ENCODE measurements at regions of chr12 and their contacts with region 1.

Region 1: DNA sequence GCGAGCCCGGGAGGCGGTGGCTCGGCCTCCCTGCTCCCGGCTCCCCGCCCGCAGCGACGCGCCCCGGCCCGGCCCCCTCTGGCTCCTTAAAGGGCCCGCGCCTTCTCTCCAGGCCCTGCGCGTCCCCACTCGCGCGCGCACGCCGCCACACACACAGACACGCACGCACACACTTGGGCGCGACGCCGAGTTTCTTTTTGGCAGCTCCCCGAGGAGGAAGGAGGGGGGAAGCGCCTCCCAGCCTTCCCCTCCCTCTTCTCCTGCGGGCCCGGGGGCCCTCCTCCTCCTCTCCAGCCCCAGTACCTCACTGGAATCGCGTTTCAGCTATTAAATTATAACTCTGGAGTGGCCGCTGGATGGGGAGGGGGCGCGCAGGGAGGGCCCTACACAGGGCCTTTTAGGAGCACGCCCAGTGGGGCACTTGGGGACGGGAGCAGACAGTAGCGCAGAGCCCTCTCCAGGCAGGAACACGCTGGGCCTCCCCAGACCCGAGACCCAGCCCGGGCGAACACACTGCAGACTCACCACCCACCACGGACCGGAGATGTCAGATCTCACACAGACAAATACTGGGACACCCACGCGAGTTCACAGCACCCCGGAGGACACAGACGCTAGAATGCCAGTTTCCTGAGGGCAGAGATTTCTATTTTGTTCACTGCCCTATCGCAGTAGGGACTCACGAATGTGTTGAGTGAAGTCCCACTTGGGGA is 405 bp upstream of the NCOR2 start:
- DNase-seq: peak; percentile 96
- H3K4me3 Mint-ChIP-seq: peak overlapping the region; percentile 76
- H3K27ac Mint-ChIP-seq: peak overlapping the region; percentile 79
- H3K4me1 Mint-ChIP-seq: peaks cover 14% of the 10 kb centered on the region
- H3K27me3 Mint-ChIP-seq: peaks cover 2% of the 10 kb centered on the region

Region 2: GRCh38 chr12:124453419-124454351 is 114.1 kb before region 1 on chr12:
- intact Hi-C with region 1: loop called (anchors 1 kb)
- DNase-seq: peak; percentile 92
- H3K4me3 Mint-ChIP-seq: peak overlapping the region; percentile 67
- H3K27ac Mint-ChIP-seq: peak overlapping the region; percentile 75
- H3K4me1 Mint-ChIP-seq: peaks cover 37% of the 10 kb centered on the region
- H3K27me3 Mint-ChIP-seq: no peaks in the 10 kb centered on the region

Region 3: GRCh38 chr12:124466216-124467128 is 101.3 kb before region 1 on chr12:
- intact Hi-C with region 1: no loop called
- DNase-seq: peak; percentile 95
- H3K4me3 Mint-ChIP-seq: peak overlapping the region; percentile 69
- H3K27ac Mint-ChIP-seq: peak overlapping the region; percentile 80
- H3K4me1 Mint-ChIP-seq: peaks cover 26% of the 10 kb centered on the region
- H3K27me3 Mint-ChIP-seq: no peaks in the 10 kb centered on the region

Region 4: GRCh38 chr12:124588751-124589267 is 21.0 kb after region 1 on chr12:
- intact Hi-C with region 1: loop called (anchors 2 kb)
- DNase-seq: peak; percentile 68
- H3K4me3 Mint-ChIP-seq: no peak overlapping the region
- H3K27ac Mint-ChIP-seq: peak overlapping the region; percentile 21
- H3K4me1 Mint-ChIP-seq: peaks cover 10% of the 10 kb centered on the region
- H3K27me3 Mint-ChIP-seq: peaks cover 15% of the 10 kb centered on the region

Region 5: DNA sequence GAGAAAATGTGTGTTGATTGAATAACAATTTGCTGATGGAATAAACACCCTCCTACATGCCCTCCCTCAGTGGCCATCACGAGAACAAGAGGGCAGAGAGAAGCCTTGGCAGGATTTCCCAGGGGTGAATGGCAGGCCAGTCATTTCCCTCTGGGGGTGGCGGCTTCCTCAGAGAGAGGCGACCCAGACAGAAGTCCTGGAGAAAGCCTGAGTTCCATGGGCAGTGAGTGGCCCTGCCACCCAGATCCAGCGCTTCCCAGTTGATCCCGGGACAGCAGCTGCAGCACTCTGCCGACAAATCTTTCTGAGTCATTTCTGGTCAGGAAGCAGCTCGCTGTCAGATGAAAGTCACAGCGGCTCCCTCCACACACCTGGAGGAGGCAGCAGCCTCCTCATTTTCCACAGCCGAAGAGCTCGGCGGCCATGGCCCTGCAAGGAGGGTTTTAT is 172.9 kb after region 1 on chr12:
- intact Hi-C with region 1: no loop called
- DNase-seq: peak; percentile 63
- H3K4me3 Mint-ChIP-seq: no peak overlapping the region
- H3K27ac Mint-ChIP-seq: no peak overlapping the region
- H3K4me1 Mint-ChIP-seq: peaks cover 23% of the 10 kb centered on the region
- H3K27me3 Mint-ChIP-seq: peaks cover 10% of the 10 kb centered on the region

Region 6: DNA sequence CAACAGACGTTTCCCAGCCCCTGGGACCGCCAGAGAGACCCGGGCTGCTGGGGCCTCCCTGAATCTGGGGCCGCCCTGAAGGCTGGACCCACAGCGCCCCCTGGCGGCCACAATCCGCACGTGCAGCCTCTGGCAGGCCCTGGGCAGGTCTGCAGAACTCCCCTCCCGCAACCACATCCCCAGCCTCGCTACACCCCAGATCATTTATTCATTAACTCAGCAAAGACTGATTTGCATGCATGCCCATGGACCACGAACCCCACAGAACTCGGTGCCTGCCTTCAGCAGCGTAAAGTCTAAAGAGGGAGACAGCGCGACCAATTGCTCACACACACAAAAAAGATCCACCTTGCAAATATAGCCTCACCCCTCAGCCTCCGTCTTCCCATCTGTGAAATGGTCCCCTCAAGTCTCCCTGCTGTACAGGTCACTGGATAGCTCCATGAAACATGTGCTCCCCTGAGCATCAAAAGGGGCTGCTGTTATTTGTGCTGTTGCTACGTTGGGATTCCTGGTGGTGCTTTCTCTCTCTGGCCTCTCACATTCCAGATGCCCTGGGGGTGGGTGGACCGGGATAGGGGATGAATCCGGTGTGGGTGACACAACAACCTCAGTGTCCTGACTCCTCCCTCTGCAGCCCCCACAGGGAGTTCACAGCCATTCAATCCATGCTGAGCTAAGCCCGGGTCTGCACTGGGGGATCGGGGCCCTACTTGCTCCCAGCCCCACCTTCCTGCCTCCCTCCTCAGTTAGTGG is 199.4 kb after region 1 on chr12:
- intact Hi-C with region 1: loop called (anchors 2 kb)
- DNase-seq: peak; percentile 95
- H3K4me3 Mint-ChIP-seq: no peak overlapping the region
- H3K27ac Mint-ChIP-seq: no peak overlapping the region
- H3K4me1 Mint-ChIP-seq: peaks cover 14% of the 10 kb centered on the region
- H3K27me3 Mint-ChIP-seq: peaks cover 24% of the 10 kb centered on the region

Region 7: GRCh38 chr12:124863416-124864325 is 295.9 kb after region 1 on chr12 and contains the start of gene SCARB1:
- intact Hi-C with region 1: loop called (anchors 5 kb)
- DNase-seq: peak; percentile 92
- H3K4me3 Mint-ChIP-seq: peak within 1 kb of the TSS; percentile 84
- H3K27ac Mint-ChIP-seq: peak within 1 kb of the TSS; percentile 95
- H3K4me1 Mint-ChIP-seq: peaks cover 18% of the 10 kb centered on the region
- H3K27me3 Mint-ChIP-seq: peaks cover 7% of the 10 kb centered on the region
- total RNA-seq, gene SCARB1: 23.8 and 25.6 TPM in 2 replicates

Measured in activated CD4-positive, alpha-beta T cell treated with anti-CD3 and anti-CD28 coated beads, Interleukin-2, amount 10 ng/mL, durations not matched to agents 24 days and 14 days (primary cell).